ENCODE measurements at regions of chr17 and their contacts with region 1.

Region 1: GRCh38 chr17:47776330-47777197 is 43.5 kb downstream of the TBX21 start:
- DNase-seq: peak; percentile 30 to 40
- H3K4me3 ChIP-seq: no peak overlapping the region
- H3K27ac ChIP-seq: no peak overlapping the region
- H3K4me1 ChIP-seq: no peaks in the 10 kb centered on the region
- H3K27me3 ChIP-seq: peaks cover 81% of the 10 kb centered on the region
- CTCF ChIP-seq: peak; percentile 91

Region 2: GRCh38 chr17:47831003-47831933 is 54.7 kb after region 1 on chr17 and contains the starts of genes LRRC46 and MRPL10:
- CTCF ChIA-PET with region 1: no interaction called
- POLR2A ChIA-PET with region 1: interaction called, 3 read pairs
- intact Hi-C with region 1: loop called (anchors 1 kb)
- DNase-seq: peak; percentile 80 to 90
- H3K4me3 ChIP-seq: peak within 1 kb of the TSS; percentile 76
- H3K27ac ChIP-seq: peak within 1 kb of the TSS; percentile 63
- H3K4me1 ChIP-seq: peaks cover 20% of the 10 kb centered on the region
- H3K27me3 ChIP-seq: no peaks in the 10 kb centered on the region
- CTCF ChIP-seq: peak; percentile 61; the same call in 1 of the 2 replicates
- total RNA-seq, gene LRRC46: 1.5 and 1.9 TPM in 2 replicates
- total RNA-seq, gene MRPL10: 50.1 and 63.8 TPM in 2 replicates

Region 3: DNA sequence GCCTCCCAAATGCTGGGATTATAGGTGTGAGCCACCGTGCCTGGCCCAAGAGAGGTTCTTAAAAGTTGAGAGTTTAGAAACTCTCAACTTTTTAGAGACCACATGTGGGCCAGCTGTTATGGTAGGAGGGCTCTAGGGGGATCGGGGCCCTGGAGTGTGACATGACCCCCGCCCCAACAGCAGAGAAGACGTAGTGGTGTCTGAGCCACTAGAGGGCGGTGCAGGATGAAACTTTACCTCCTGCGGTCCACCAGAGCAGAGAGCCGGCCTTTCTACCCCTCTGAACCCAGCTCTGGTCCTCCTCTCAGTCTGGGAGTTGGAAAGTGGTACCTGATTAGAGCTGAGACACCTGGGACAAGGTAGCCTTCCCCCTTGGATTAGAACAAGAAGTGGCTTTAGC is 201.8 kb after region 1 on chr17:
- CTCF ChIA-PET with region 1: no interaction called
- POLR2A ChIA-PET with region 1: interaction called, 18 read pairs
- intact Hi-C with region 1: no loop called
- DNase-seq: peak in 1 of 2 experiments; percentile 32
- H3K4me3 ChIP-seq: no peak overlapping the region
- H3K27ac ChIP-seq: no peak overlapping the region
- H3K4me1 ChIP-seq: no peaks in the 10 kb centered on the region
- H3K27me3 ChIP-seq: no peaks in the 10 kb centered on the region
- CTCF ChIP-seq: peak; percentile 87